ENCODE measurements at regions of chr13 and their contacts with region 1.

Region 1: DNA sequence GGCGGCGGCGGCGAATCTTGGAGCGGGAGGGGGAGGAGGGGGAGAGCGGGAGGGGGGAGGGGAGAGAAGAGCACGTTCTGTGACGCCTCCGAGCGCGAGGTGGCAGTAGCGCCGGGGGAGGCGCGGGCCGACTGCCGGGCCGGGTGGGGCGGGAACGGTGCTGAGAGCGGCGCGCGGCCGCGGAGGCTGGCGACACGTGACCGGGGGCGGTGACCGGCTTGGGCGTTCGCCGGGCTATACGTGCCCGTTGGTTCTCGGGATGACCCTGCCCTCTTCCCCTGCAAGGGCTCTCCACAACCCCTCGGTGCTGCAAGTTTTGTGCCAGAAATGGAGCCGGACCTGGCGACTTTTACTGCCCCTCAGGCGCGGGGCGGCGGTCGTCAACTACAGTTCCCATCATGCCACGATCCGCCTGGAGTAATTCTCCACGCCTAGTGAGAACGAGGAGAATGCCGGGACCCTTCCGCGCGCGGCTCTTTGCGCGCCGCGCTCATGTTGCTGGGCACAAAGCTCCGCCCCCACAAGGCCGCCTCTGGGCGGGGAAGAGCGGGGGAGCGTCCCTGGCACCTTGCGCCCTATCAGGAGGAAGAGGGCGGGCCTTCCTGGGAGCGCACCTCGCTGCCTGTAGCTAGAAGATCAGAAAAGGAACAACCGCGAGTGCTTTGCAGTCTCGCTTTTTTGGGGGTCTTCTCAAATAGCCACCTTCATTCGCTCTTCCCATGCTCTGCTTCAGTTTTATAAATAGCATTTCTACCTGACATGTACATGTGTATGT is at the start of gene KPNA3:
- DNase-seq: peak; percentile 99
- ATAC-seq: peak; percentile 98
- total RNA-seq, gene KPNA3: 64.7 TPM

Region 2: DNA sequence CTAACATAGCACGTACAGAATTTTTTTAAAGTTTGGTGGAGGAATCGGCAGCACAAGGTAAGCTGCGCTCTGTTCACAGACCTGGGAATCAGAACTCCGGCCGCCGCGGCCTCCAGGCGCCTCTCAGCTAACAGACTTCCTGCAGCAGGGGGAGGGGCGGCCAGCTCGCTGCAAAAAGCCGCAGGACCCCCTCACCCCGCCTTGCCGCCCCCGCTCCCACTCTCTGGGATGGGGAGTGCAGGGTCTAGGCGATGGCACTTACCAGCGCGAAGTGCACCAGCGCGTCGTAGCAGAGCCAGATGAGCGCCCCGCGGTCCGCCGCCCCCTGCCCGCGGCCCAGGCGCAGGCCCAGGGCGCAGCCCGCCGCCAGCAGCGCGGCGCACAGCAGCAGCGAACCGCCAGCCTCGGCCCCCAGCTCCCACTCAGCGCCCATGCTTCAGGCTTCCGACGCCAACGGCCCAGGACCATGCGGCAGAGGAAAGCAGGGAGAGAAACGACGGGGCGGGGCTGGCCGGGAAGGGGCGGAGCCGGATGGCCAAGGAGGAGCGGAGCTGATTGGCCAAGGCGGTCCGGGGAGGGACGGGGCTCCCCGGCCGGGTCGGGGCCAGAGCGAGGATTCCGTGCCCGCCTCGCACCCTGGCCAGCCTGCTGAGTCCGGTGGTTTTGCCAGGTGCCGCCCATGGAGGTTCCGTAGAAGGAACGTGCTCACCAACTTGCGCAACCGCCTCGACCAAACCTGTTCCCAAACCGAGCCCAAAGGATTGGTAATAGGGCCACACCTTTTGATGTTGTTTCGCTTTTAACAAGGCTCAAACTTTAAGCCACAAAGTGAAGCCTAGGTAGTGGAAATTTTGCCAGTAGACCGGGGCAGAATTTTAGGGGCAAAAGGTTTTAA is 101.5 kb before region 1 on chr13 and contains the start of gene EBPL:
- intact Hi-C with region 1: loop called (anchors 2 kb)
- DNase-seq: peak; percentile 96
- ATAC-seq: peak; percentile 99
- total RNA-seq, gene EBPL: 5.8 TPM

Region 3: DNA sequence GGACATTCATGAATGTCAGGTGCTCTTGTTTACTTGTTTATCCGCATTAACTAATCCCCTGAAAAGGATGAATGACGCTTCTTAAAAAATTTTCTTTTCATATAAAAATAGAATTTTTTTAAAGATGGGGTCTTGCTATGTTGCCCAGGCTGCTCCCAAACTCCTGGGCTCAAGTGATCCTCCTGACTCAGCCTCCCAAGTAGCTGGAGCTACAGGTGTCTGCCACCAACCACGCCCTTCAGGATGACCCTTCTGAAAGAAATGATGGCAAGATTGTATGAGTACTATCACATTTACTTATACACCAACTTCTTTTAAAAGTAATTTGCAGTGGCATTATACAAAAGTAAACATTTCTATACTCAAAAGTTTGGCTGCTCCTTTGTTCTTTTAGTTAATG is 95.3 kb before region 1 on chr13:
- intact Hi-C with region 1: loop called (anchors 2 kb)
- DNase-seq: no peak
- ATAC-seq: no peak

Region 4: GRCh38 chr13:49731766-49732165 is 61.0 kb before region 1 on chr13:
- intact Hi-C with region 1: loop called (anchors 5 kb)
- DNase-seq: no peak
- ATAC-seq: no peak

Region 5: GRCh38 chr13:49840266-49840665 is 47.5 kb after region 1 on chr13:
- intact Hi-C with region 1: loop called (anchors 5 kb)
- DNase-seq: no peak
- ATAC-seq: no peak

Region 6: GRCh38 chr13:49936085-49936940 is 143.6 kb after region 1 on chr13 and contains the start of gene SPRYD7:
- intact Hi-C with region 1: loop called (anchors 10 kb)
- DNase-seq: peak; percentile 99
- ATAC-seq: peak; percentile 100
- total RNA-seq, gene SPRYD7: 11.4 TPM

Region 7: DNA sequence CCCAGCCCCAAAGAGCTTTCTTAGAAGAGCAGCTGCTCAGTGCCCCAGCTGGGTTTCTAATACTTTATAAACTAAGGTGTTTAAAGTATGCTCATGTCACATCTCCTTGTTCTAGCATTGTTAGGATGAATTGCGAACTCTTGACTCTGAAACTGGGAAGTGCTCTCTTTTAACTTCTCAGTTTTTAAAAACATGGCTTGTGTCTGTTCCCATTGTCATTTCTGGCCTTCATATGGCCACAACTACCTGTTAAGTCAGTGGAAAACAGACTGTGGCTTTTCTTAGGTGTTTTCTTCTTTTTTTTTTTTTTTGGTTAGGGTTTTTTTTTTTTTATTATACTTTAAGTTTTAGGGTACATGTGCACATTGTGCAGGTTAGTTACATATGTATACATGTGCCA is 387.2 kb after region 1 on chr13:
- intact Hi-C with region 1: no loop called
- DNase-seq: no peak
- ATAC-seq: no peak

Measured in Right ventricle myocardium inferior (tissue), 1 donor.